HEK293 (cell line): ENCODE measurements at regions of chr11 and their contacts with region 1.

Region 1: DNA sequence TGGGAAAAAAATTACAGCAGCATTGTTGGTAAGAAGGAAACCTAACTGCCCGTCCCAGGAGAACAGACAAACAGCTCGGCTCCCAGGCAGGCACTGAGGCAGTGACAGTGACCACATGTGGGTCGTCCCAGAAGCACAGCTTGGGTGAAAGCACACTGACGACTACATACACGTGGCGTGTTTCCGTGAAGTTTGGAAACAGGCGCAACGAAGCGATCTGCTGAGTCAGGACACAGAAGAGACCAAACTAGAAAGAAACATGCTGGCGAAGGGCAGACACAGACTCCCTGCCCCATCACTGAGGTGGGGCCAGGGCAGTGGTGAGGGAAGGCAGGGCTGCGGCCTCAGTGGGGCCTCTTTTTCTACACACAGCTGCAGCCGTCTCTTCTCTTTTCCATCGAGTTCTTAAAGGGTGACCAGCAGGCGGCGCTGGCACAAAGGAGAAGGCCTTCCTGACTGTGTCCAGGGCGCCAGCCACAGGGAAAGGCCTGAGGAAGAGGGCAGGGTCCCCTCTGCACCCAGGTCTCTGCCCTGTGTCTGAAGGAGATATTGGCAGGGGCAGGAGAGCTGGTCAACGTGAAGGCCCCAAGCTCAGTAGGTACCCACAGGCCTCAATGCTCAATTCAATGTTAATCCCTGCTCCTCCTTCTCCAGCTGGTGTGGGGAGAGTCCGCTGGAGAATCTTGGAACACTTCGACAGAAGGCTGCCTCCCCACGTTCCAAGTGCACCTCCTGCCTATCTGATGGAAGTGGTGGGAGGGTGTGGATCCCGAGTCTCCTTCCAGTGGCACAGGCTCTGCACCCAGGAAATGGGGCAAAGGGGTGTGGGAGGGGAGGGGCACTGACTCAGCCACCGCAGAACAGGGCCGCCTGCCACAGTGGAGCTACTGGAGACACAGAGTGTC is 19.9 kb downstream of the CARS1 start:
- H3K4me3 ChIP-seq: no peak overlapping the region
- H3K27ac ChIP-seq: no peak overlapping the region
- H3K4me1 ChIP-seq: no peaks in the 10 kb centered on the region
- CTCF ChIP-seq: peak; percentile 32; the same call in 1 of the 2 replicates

Region 2: GRCh38 chr11:3021125-3021524 is 16.2 kb before region 1 on chr11:
- CTCF ChIA-PET with region 1: interaction called, 10 read pairs
- POLR2A ChIA-PET with region 1: no interaction called
- H3K4me3 ChIP-seq: no peak overlapping the region
- H3K27ac ChIP-seq: no peak overlapping the region
- H3K4me1 ChIP-seq: no peaks in the 10 kb centered on the region
- CTCF ChIP-seq: peak; percentile 14; the same call in 1 of the 2 replicates

Region 3: DNA sequence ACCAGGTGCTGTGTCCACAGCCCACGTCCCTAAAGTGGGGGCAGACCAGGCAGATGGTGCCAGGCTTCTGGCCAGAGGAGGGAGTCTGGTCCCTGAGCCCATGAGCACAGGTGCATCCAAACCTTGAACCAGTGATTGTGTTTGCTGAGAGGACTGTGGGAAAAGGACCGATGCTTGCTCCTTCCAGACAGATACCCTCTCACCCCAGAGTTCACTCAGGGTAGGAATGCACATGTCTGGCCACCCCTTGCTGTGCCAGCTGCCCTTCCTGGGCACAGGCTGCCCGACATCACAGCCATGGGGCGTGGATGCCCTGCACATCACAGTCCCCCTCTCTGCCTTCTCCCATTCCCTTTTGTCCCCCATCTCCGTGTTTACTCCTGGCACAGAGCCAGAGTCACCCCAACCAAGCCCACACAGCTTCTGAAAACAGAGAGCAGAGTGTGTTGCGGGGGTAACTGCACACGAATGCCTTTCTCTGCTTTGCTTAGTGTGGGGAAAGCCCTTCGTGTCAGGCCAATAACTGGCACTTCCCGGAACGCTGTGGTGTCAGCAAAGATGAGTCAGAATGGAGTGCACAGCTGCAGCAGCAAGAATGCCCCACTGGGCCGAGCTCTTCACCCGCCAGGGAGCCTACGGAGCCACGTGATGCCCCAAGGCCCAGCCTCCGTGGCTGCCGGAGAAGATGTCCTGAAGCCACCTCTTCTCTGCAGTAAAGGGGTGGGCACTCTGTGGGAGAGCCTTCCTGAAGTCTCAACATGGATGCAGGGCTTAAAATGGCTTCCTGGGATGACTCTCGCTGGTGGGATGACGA is 12.3 kb after region 1 on chr11:
- CTCF ChIA-PET with region 1: interaction called, 45 read pairs
- POLR2A ChIA-PET with region 1: interaction called, 7 read pairs
- H3K4me3 ChIP-seq: no peak overlapping the region
- H3K27ac ChIP-seq: peak overlapping the region; percentile 2; the same call in 1 of the 2 replicates
- H3K4me1 ChIP-seq: peaks cover 24% of the 10 kb centered on the region
- CTCF ChIP-seq: 0 out of 2 replicates have a peak, but pooled peaks have one; percentile 22

Region 4: DNA sequence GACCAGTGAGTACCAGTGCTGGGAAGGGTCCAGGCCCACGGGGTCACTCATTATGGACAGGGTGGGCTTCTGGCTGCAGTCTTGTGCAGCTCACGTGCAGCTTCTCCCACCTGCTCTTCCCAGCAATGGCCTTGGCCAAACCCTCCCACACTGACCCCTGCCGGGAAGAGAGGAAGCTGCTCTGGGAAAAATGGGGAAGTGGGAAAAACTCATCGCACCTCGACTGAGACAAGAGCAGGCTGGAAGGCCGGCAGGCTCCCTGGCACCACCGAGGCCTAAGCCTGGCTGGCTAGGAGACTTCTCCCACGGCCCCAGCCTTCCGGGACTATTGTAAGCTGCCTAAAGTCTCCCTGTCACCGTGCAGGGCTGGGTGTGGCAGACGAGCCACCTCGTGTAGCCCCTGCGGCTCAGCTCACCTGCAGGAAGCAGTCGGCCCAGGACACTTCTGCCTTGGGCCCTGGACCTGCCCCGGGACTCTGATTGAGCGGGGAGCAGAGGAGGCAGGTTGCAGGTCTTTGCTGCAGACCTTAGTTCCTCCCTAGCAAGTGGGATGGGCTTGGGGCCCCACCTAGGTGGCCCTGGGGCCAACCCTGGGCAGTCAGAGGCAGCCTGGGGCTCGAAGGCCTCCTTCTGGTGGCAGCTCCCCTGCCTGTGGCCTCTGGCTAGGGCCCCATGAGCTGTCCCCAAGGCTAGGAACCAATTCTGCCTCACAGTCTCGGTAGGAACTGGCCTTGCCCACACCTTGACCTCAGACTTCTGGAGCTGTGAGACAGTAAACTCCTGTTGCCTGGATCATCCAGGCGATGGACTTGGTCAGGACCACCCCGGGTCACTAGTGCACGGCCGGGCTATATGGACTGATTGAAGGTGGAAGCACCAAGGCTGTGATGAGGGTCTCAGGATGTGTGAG is 158.2 kb after region 1 on chr11:
- CTCF ChIA-PET with region 1: interaction called, 11 read pairs
- POLR2A ChIA-PET with region 1: no interaction called
- H3K4me3 ChIP-seq: no peak overlapping the region
- H3K27ac ChIP-seq: no peak overlapping the region
- H3K4me1 ChIP-seq: no peaks in the 10 kb centered on the region
- CTCF ChIP-seq: 0 out of 2 replicates have a peak, but pooled peaks have one; percentile 21

Region 5: GRCh38 chr11:3215346-3216045 is 178.2 kb after region 1 on chr11:
- CTCF ChIA-PET with region 1: interaction called, 13 read pairs
- POLR2A ChIA-PET with region 1: no interaction called
- H3K4me3 ChIP-seq: no peak overlapping the region
- H3K27ac ChIP-seq: no peak overlapping the region
- H3K4me1 ChIP-seq: no peaks in the 10 kb centered on the region
- CTCF ChIP-seq: no peak